ENCODE measurements at regions of chr9 and their contacts with region 1.

Region 1: DNA sequence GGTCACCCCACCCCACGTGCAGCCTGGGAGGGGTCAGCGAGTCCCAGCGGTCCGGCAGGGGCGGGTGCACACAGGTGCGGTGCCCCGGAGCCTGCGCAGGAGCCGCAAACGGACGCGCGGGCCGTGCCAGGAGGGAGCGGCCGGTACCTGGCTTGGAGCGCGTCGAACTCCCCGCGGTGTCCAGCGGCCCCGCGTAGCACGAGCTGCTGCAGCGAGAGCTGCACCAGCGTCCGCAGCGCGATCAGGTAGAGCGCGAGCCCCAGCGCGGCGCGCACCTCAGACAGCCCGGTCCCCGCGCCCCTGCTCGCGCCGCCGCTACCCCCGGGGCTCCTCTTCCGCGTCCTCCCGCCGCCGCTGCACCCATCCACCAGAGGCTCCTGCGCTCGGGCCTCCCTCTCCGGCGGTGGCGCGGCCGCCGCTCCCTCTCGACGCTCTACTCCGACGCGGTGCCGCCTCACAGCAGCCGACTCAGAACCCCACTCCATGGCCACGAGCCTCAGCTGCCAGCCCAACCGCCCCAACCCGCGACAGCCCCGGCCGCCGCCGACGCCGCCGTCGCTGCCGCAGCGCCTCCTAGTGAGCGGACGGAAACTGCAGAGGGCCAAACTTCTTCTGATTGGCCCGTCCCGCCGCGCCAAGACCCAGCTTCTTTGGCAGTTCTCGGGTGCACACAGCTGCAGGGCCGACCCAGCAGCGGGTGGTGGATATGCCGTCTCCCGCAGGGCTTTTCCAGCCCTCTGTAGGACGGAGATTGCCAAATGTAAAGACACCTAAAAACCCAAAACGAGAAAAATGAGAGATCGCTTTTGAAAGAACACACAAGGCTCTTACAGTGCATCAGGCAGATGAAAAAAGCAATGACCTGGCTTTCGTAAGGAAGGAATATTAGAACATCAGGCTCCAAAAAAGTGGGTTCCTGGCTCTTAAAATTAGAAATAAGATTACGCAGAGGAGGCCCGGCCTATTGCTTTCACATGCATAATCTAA is at the start of gene ERMP1:
- DNase-seq: peak; percentile 88
- H3K4me3 Mint-ChIP-seq: peak within 1 kb of the TSS; percentile 89
- H3K27ac Mint-ChIP-seq: peak within 1 kb of the TSS; percentile 92
- H3K4me1 Mint-ChIP-seq: peaks cover 53% of the 10 kb centered on the region
- H3K27me3 Mint-ChIP-seq: peaks cover 6% of the 10 kb centered on the region
- total RNA-seq, gene ERMP1: 24.2 to 25.1 TPM

Region 2: DNA sequence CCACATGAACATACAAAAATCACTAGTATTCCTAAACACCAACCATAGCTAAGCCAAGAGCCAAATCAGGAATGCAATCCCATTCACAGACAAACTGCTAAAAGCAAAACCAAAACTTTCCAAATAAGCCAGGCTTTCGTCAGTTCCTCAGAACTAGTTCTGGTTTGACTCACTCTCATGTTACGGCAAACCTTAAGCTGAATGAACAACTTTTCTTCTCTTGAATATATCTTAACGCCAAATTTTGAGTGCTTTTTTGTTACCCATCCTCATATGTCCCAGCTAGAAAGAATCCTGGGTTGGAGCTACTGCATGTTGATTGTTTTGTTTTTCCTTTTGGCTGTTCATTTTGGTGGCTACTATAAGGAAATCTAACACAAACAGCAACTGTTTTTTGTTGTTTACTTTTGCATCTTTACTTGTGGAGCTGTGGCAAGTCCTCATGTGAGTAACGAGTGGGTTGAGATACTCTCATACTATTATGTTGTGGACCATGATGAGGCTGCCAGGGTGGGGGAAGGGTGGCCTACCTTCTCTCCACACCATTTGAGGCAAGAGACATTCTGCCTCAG is 322.4 kb before region 1 on chr9 and contains the start of gene PDCD1LG2:
- CTCF ChIA-PET with region 1: no interaction called
- POLR2A ChIA-PET with region 1: no interaction called
- DNase-seq: peak; percentile 27
- H3K4me3 Mint-ChIP-seq: peak within 1 kb of the TSS; percentile 77
- H3K27ac Mint-ChIP-seq: peak within 1 kb of the TSS; percentile 94
- H3K4me1 Mint-ChIP-seq: peaks cover 54% of the 10 kb centered on the region
- H3K27me3 Mint-ChIP-seq: no peaks in the 10 kb centered on the region
- total RNA-seq, gene PDCD1LG2: 2.2 TPM

Region 3: GRCh38 chr9:5820425-5820824 is 12.4 kb before region 1 on chr9:
- CTCF ChIA-PET with region 1: interaction called, 25 read pairs
- POLR2A ChIA-PET with region 1: no interaction called
- DNase-seq: no peak
- H3K4me3 Mint-ChIP-seq: no peak overlapping the region
- H3K27ac Mint-ChIP-seq: no peak overlapping the region
- H3K4me1 Mint-ChIP-seq: peaks cover 11% of the 10 kb centered on the region
- H3K27me3 Mint-ChIP-seq: no peaks in the 10 kb centered on the region

Region 4: DNA sequence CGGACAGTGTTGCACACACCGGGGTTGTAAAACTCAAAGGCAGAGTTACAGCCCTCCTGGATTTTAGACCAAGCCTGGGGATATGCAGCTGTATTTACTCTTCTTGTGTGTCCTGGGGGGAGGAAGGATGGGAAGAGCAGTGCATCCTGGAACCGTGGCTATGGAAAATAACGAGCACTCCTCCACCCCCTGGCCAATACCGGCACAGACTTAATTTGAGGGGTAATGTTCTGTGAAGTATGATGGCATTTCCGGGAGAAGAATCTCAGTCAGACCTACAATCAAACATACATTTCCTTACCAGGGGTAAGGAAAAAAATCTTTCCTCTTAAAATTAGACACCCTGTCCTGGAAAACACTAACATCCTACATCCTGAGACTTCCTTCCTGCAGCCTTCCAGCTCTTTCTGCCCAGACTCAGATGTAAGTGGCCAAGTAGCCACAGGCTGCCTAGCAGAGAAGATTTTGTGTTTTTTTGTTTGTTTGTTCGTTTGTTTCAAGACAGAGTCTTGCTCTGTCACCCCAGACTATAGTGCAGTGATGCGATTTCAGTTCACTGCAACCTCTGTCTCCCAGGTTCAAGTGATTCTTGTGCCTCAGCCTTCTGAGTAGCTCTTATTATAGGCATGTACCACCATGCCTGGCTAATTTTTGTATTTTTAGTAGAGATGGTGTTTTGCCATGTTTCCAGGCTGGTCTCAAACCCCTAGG is 11.1 kb after region 1 on chr9:
- CTCF ChIA-PET with region 1: interaction called, 79 read pairs
- POLR2A ChIA-PET with region 1: interaction called, 5 read pairs
- DNase-seq: no peak
- H3K4me3 Mint-ChIP-seq: peak overlapping the region; percentile 58
- H3K27ac Mint-ChIP-seq: peak overlapping the region; percentile 88
- H3K4me1 Mint-ChIP-seq: peaks cover 83% of the 10 kb centered on the region
- H3K27me3 Mint-ChIP-seq: peaks cover 5% of the 10 kb centered on the region

Region 5: DNA sequence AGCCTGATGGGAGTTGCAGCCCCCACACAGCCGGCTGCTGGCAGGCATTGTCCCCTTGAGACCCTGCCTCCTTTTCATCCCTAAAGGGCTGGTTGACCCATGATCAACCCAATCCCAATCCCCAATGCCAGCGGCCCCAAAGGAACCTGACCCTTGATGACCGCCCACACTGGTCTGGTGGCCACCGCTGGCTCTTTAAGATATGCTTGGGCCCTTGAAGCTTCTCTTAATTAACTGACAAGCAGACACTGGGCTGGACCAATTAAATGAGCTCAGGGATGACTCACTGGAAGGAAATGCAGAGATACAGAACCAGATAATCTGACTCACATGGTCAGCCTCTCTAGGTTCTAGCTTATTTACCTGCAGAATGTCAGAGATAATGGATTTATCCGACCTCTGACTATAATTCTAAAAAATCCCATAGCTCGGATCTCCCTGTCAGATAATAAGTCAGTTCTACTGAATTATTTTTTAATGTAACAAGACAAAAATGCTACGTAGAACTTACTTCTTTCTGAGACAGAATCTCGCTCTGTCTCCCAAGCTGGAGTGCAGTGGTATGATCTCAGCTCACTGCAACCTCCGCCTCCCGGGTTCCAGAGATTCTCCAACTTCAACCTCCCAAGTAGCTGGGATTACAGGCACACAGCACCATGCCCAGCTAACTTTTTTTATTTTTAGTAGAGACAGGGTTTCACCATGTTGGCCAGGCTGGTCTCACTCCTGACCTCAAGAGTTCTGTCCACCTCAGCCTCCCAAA is 46.8 kb after region 1 on chr9:
- CTCF ChIA-PET with region 1: interaction called, 17 read pairs
- POLR2A ChIA-PET with region 1: interaction called, 4 read pairs
- DNase-seq: no peak
- H3K4me3 Mint-ChIP-seq: no peak overlapping the region
- H3K27ac Mint-ChIP-seq: no peak overlapping the region
- H3K4me1 Mint-ChIP-seq: peaks cover 8% of the 10 kb centered on the region
- H3K27me3 Mint-ChIP-seq: no peaks in the 10 kb centered on the region

Region 6: GRCh38 chr9:5886114-5886939 is 53.5 kb after region 1 on chr9:
- CTCF ChIA-PET with region 1: interaction called, 14 read pairs
- POLR2A ChIA-PET with region 1: no interaction called
- DNase-seq: peak; percentile 85
- H3K4me3 Mint-ChIP-seq: no peak overlapping the region
- H3K27ac Mint-ChIP-seq: no peak overlapping the region
- H3K4me1 Mint-ChIP-seq: peaks cover 5% of the 10 kb centered on the region
- H3K27me3 Mint-ChIP-seq: peaks cover 3% of the 10 kb centered on the region

Region 7: DNA sequence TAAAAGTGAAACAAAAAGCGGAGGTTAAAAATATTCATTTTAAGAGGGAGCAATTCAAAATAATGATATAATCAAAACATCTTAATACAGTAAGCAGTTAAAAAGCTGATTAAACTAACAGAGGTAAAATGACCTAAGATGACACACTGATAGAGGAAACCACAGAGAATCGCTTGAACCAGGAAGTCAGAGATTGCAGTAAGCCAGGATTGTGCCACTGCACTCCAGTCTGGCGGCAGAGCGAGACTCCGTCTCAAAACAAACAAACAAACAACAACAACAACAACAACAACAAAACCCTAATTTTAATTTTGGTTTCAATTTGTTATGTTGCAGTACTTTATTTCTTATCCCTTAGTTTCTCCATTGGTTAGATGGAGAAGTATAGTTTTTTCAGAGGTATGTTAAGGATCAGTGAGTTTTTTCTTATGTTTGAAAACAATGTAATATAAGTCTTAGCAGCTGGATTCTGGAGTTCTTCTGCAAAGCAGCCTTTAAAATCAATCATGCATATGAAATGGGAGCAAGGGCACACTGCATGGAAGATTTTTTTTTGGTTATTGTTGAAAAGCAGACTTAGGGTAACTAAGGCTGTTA is 116.4 kb after region 1 on chr9:
- CTCF ChIA-PET with region 1: no interaction called
- POLR2A ChIA-PET with region 1: no interaction called
- DNase-seq: peak; percentile 26
- H3K4me3 Mint-ChIP-seq: peak overlapping the region; percentile 37
- H3K27ac Mint-ChIP-seq: no peak overlapping the region
- H3K4me1 Mint-ChIP-seq: peaks cover 18% of the 10 kb centered on the region
- H3K27me3 Mint-ChIP-seq: no peaks in the 10 kb centered on the region

Measured in activated CD4-positive, alpha-beta T cell treated with anti-CD3 and anti-CD28 coated beads, Interleukin-2, amount 10 ng/mL, durations not matched to agents 7 days and 5 days (primary cell).